PC-9 (cell line): ENCODE measurements at regions of chr7 and their contacts with region 1.

Region 1: DNA sequence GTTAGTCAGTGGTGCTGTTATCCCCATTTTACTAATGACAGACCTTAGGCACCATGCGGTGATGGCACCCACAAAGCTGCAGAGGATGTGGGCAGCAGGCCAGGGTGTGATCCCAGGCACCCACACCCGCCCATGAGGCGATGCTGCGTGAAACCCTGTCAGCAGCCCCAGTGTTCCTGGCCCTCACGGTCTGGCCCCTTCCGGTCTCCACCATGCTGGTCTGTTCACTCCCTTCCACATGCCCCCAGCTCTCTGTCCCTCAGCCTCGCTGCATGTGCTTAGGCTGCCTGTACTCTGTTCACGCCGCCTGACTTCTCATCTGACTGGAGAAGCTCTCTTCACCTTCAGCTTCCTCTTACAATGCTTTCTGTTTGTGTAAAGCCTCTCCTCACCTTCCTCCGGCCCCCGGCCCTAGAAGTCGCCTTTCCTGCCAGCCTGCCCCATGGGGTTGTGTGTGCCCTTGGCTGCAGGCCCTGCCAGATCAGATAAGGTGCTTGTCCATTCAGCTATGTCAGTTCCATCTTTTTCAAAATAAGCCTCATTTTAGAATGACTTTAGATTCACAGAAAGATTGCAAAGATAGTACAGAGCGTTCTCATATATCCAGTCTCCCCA is 17.6 kb upstream of the ORAI2 start:
- DNase-seq: no peak
- H3K4me3 ChIP-seq: no peak overlapping the region
- H3K27ac ChIP-seq: no peak overlapping the region
- H3K4me1 ChIP-seq: no peaks in the 10 kb centered on the region
- H3K27me3 ChIP-seq: no peaks in the 10 kb centered on the region
- CTCF ChIP-seq: no peak

Region 2: GRCh38 chr7:102376964-102377466 is 38.8 kb before region 1 on chr7:
- CTCF ChIA-PET with region 1: no interaction called
- POLR2A ChIA-PET with region 1: no interaction called
- intact Hi-C with region 1: no loop called
- DNase-seq: no peak
- H3K4me3 ChIP-seq: no peak overlapping the region
- H3K27ac ChIP-seq: no peak overlapping the region
- H3K4me1 ChIP-seq: no peaks in the 10 kb centered on the region
- H3K27me3 ChIP-seq: no peaks in the 10 kb centered on the region
- CTCF ChIP-seq: no peak

Region 3: GRCh38 chr7:102454468-102454867 is 38.7 kb after region 1 on chr7:
- CTCF ChIA-PET with region 1: no interaction called
- POLR2A ChIA-PET with region 1: no interaction called
- intact Hi-C with region 1: no loop called
- DNase-seq: no peak
- H3K4me3 ChIP-seq: no peak overlapping the region
- H3K27ac ChIP-seq: no peak overlapping the region
- H3K4me1 ChIP-seq: no peaks in the 10 kb centered on the region
- H3K27me3 ChIP-seq: no peaks in the 10 kb centered on the region
- CTCF ChIP-seq: no peak

Region 4: GRCh38 chr7:102464577-102465280 is 48.9 kb after region 1 on chr7 and contains the starts of genes ALKBH4 and LRWD1:
- CTCF ChIA-PET with region 1: interaction called, 7 read pairs
- POLR2A ChIA-PET with region 1: interaction called, 28 read pairs
- intact Hi-C with region 1: no loop called
- DNase-seq: peak; percentile 69 to 95
- H3K4me3 ChIP-seq: peak within 1 kb of the TSS; percentile 99
- H3K27ac ChIP-seq: no peak within 1 kb of the TSS
- H3K4me1 ChIP-seq: peaks cover 12% of the 10 kb centered on the region
- H3K27me3 ChIP-seq: no peaks in the 10 kb centered on the region
- CTCF ChIP-seq: no peak
- total RNA-seq, gene ALKBH4: 10.9 and 18.1 TPM in 2 replicates
- total RNA-seq, gene LRWD1: 35.3 and 57.9 TPM in 2 replicates

Region 5: DNA sequence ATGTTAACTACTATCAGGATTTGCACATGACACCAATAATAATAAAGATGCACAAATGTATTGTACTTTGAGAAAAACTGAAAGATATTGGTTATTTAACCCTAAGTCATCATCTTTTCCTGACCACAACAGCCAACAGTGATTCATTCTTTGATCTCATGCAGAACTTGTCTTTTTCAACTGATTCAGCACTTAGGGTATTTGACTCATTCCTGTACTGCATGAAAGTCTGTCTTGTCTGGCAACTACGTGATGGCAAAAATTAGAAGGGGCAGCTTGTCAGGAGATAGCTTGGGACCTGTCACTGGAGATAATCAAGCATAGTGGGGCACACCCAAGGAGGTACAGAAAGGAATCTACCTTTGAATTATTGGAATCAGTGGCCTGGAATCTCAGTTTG is 419.2 kb after region 1 on chr7:
- CTCF ChIA-PET with region 1: no interaction called
- POLR2A ChIA-PET with region 1: no interaction called
- intact Hi-C with region 1: no loop called
- DNase-seq: peak; percentile 7 to 64
- H3K4me3 ChIP-seq: no peak overlapping the region
- H3K27ac ChIP-seq: no peak overlapping the region
- H3K4me1 ChIP-seq: peaks cover 19% of the 10 kb centered on the region
- H3K27me3 ChIP-seq: no peaks in the 10 kb centered on the region
- CTCF ChIP-seq: no peak